ENCODE measurements at regions of chr10 and their contacts with region 1.

Region 1: DNA sequence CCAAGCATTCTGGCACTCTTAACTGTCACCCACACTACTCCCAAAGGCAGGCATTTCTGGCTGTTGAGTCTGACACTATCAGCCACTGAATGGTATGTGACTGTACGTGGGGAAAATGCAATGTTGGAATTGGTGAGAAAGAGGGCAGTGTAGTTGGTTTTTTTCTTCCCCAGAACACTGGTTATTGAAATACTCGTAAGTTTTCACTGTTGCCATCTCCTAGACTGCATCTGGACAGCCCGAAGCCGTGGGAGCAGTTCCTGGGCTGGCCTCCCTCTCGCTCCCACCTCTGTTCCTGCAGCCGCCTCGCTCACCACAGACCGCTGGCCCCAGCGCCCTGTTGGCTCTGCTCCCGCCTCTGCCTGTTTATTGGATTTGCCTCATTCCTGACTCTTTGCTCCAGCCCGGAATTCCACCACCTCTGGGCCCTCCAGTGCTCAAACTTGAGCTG is 5.7 kb downstream of the PLCE1 start:
- DNase-seq: no peak
- ATAC-seq: no peak
- H3K4me3 Mint-ChIP-seq: no peak overlapping the region
- H3K27ac Mint-ChIP-seq: no peak overlapping the region
- H3K4me1 Mint-ChIP-seq: no peaks in the 10 kb centered on the region
- H3K27me3 Mint-ChIP-seq: peaks cover 30% of the 10 kb centered on the region

Region 2: DNA sequence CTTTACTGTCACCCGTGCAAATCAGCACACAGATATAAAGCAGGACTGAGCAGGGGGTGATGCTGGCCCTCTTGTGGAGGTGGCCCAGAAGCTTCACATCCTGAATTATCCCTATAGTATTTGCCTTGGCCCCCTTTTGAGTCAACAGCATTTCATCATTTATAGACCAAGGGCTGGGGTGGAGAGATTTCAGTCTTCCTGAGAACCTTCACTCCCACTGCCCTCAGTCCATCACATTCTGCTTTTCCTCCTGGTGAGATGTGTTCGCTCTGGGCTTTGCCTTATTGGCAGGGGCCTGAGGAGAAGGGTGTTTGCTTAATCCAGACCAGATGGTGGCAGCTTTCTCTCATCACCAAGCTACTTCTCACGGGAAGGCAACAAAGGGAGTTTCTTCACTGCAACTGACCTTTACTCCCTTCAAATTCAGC is 315.6 kb after region 1 on chr10:
- CTCF ChIA-PET with region 1: no interaction called
- POLR2A ChIA-PET with region 1: no interaction called
- intact Hi-C with region 1: loop called in 1 of 2 experiments (anchors 5 kb)
- DNase-seq: no peak
- ATAC-seq: no peak
- H3K4me3 Mint-ChIP-seq: no peak overlapping the region
- H3K27ac Mint-ChIP-seq: no peak overlapping the region
- H3K4me1 Mint-ChIP-seq: no peaks in the 10 kb centered on the region
- H3K27me3 Mint-ChIP-seq: peaks cover 11% of the 10 kb centered on the region

Measured in activated CD4-positive, alpha-beta T cell treated with anti-CD3 and anti-CD28 coated beads for 36 hours (primary cell).